OCI-LY7 (cell line): ENCODE measurements at regions of chr6 and their contacts with region 1.

Region 1: GRCh38 chr6:17666646-17667045 is 40.1 kb downstream of the NUP153 start:
- DNase-seq: no peak
- H3K4me3 ChIP-seq: no peak overlapping the region
- H3K27ac ChIP-seq: no peak overlapping the region
- H3K4me1 ChIP-seq: no peaks in the 10 kb centered on the region
- CTCF ChIP-seq: no peak

Region 2: DNA sequence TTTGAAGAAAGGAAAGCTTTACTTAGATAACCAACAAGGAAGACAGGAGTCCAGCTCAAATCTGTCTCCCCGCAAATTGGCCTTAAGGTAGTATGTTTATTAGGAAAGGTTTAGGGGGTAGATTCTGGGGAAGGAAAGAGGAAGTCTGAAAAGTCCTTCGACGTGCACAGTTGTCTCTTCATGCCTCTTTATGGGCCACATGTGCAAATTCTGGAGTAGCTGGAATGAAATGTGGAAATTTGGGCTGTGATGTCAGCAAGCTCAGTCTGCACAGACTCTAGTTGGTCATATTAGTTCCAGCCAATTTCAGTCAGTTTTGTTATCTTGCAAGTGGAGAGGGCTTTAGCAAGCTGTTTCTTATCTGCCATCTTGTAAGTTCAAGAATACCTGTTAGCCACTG is 10.0 kb before region 1 on chr6:
- CTCF ChIA-PET with region 1: no interaction called
- POLR2A ChIA-PET with region 1: interaction called, 12 read pairs
- intact Hi-C with region 1: no loop called
- DNase-seq: no peak
- H3K4me3 ChIP-seq: no peak overlapping the region
- H3K27ac ChIP-seq: no peak overlapping the region
- H3K4me1 ChIP-seq: no peaks in the 10 kb centered on the region
- CTCF ChIP-seq: no peak

Region 3: GRCh38 chr6:18387061-18387721 is 720.5 kb after region 1 on chr6 and contains the start of gene RNF144B:
- CTCF ChIA-PET with region 1: no interaction called
- POLR2A ChIA-PET with region 1: no interaction called
- intact Hi-C with region 1: no loop called
- DNase-seq: peak; percentile 97
- H3K4me3 ChIP-seq: peak within 1 kb of the TSS; percentile 98
- H3K27ac ChIP-seq: peak within 1 kb of the TSS; percentile 75
- H3K4me1 ChIP-seq: peaks cover 59% of the 10 kb centered on the region
- CTCF ChIP-seq: no peak
- total RNA-seq, gene RNF144B: 83.4 and 87.9 TPM in 2 replicates